ENCODE measurements at regions of chr15 and their contacts with region 1.

Region 1: DNA sequence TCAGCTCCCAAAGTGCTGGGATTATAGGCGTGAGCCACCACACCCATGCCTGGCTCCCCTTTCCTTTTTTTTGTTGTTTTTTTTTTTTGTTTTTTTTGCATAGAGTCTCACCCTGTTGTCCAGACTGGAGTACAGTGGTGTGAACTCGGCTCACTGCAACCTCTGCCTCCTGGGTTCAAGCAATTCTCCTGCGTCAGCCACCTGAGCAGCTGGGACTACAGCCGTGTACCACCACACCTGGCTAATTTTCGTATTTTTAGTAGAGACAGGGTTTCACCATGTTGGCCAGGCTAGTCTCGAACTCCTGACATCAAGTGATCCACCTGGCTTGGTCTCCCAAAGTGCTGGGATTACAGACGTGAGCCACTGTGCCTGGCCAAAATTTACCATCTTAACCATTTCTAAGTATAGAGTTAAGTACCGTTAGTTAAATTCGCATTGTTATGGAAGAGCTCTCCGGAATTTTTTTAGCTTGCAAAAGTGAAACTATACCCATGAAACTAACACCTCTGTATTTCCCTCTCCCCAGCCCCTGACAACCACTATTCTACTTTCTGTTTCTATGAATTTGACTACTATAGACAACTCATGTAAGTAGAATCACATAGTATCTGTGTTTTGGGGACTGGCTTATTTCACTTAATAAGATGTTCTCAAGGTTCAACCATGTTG is 70.9 kb upstream of the C15orf39 start:
- DNase-seq: no peak
- ATAC-seq: peak; percentile 96
- H3K4me3 Mint-ChIP-seq: peak overlapping the region; percentile 80
- H3K27ac Mint-ChIP-seq: peak overlapping the region; percentile 73
- H3K4me1 Mint-ChIP-seq: peaks cover 19% of the 10 kb centered on the region
- H3K27me3 Mint-ChIP-seq: no peaks in the 10 kb centered on the region
- CTCF ChIP-seq: no peak

Region 2: GRCh38 chr15:75215107-75216004 is 84.6 kb after region 1 on chr15:
- CTCF ChIA-PET with region 1: no interaction called
- POLR2A ChIA-PET with region 1: no interaction called
- intact Hi-C with region 1: no loop called
- DNase-seq: no peak
- ATAC-seq: no peak
- H3K4me3 Mint-ChIP-seq: no peak overlapping the region
- H3K27ac Mint-ChIP-seq: no peak overlapping the region
- H3K4me1 Mint-ChIP-seq: peaks cover 14% of the 10 kb centered on the region
- H3K27me3 Mint-ChIP-seq: no peaks in the 10 kb centered on the region
- CTCF ChIP-seq: no peak

Region 3: DNA sequence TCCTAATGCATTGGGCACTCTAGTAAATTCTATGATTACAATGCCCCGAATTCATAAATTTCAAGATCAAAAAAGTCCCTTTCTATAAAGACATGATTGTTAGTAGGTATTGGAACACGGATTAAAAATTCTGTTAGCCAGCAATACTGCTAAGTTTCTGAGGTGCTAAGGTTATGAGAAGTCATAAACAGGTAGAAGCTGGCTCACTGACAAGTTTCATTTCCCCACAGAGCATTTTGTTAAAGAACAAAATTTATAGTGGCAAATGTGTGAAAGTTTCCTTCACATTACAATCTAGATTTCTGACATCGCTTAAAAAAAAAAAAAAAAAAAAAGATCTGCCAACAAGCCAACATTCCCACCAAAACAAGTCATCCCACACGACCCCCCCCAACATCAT is 250.0 kb after region 1 on chr15:
- CTCF ChIA-PET with region 1: no interaction called
- POLR2A ChIA-PET with region 1: interaction called, 13 read pairs
- intact Hi-C with region 1: no loop called
- DNase-seq: no peak
- ATAC-seq: no peak
- H3K4me3 Mint-ChIP-seq: no peak overlapping the region
- H3K27ac Mint-ChIP-seq: peak overlapping the region; percentile 42
- H3K4me1 Mint-ChIP-seq: peaks cover 29% of the 10 kb centered on the region
- H3K27me3 Mint-ChIP-seq: no peaks in the 10 kb centered on the region
- CTCF ChIP-seq: no peak